Heart left ventricle (tissue), 16 donors: ENCODE measurements at regions of chr2 and their contacts with region 1.

Region 1: GRCh38 chr2:100416935-100417710 is at the start of gene CHST10:
- DNase-seq: peak; percentile 66 to 80 (median 75)
- ATAC-seq: peak; percentile 87 to 96 (median 94)
- H3K4me3 ChIP-seq: peak within 1 kb of the TSS; percentile 58 to 97 (median 78)
- H3K27ac ChIP-seq: peak within 1 kb of the TSS; percentile 47 to 89 (median 80)
- H3K4me1 ChIP-seq: peaks cover 0 to 22% (median 12%) of the 10 kb centered on the region in 12 donors
- H3K27me3 ChIP-seq: no peaks in the 10 kb centered on the region
- CTCF ChIP-seq: no peak
- POLR2A ChIP-seq: peak in 1 of 2 donors; percentile 45
- total RNA-seq, gene CHST10: 7.2 to 14.1 (median 9.8) TPM

Region 2: DNA sequence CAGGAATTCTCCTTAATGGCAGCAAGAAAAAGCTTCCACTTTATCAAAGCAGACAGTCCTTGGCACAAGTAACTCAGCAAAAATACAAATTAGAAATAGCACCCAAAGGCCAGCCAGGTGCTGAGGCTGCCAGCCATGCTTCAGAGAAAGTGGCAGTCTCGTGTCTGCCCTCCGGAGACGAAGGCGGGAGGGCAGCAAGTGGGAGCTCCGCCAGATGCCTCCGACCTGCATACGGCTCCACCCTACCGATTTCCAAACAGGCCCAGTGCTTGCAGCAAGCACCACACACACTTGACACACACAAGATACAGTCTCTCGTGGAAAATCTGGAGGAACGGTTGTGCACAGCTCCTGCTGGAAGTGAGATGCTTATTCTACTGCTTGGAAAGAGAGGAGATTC is 792.4 kb before region 1 on chr2:
- intact Hi-C with region 1: no loop called
- DNase-seq: peak in 3 of 5 donors; percentile 38 to 76 (median 50)
- ATAC-seq: peak; percentile 47 to 85 (median 68)
- H3K4me3 ChIP-seq: no peak overlapping the region
- H3K27ac ChIP-seq: peak overlapping the region in 2 of 12 donors; percentile 32 to 39
- H3K4me1 ChIP-seq: peaks cover 0 to 37% (median 22%) of the 10 kb centered on the region in 12 donors
- H3K27me3 ChIP-seq: no peaks in the 10 kb centered on the region
- CTCF ChIP-seq: no peak
- POLR2A ChIP-seq: no peak

Region 3: GRCh38 chr2:100984892-100985379 is 567.8 kb after region 1 on chr2:
- intact Hi-C with region 1: loop called in 1 of 10 experiments (anchors 10 kb)
- DNase-seq: peak; percentile 76 to 88 (median 79)
- ATAC-seq: peak; percentile 65 to 75 (median 66)
- H3K4me3 ChIP-seq: no peak overlapping the region
- H3K27ac ChIP-seq: peak overlapping the region in 1 of 12 donors; percentile 22
- H3K4me1 ChIP-seq: peaks cover 0 to 12% (median 0%) of the 10 kb centered on the region in 12 donors
- H3K27me3 ChIP-seq: no peaks in the 10 kb centered on the region
- CTCF ChIP-seq: peak; percentile 82 to 97 (median 90)
- POLR2A ChIP-seq: no peak